ENCODE measurements at regions of chr11 and their contacts with region 1.

Region 1: GRCh38 chr11:111601979-111602864 is at the start of gene SIK2:
- DNase-seq: peak; percentile 96
- H3K4me3 ChIP-seq: peak within 1 kb of the TSS; percentile 64 to 97 (median 85)
- H3K27ac ChIP-seq: peak within 1 kb of the TSS; percentile 98 to 100 (median 98)
- H3K4me1 ChIP-seq: peaks cover 13 to 15% of the 10 kb centered on the region in 2 donors
- H3K27me3 ChIP-seq: no peaks in the 10 kb centered on the region
- CTCF ChIP-seq: peak; percentile 83 to 100 (median 90)
- POLR2A ChIP-seq: peak; percentile 29 to 72
- total RNA-seq, gene SIK2: 20.7 to 35.0 (median 26.8) TPM

Region 2: DNA sequence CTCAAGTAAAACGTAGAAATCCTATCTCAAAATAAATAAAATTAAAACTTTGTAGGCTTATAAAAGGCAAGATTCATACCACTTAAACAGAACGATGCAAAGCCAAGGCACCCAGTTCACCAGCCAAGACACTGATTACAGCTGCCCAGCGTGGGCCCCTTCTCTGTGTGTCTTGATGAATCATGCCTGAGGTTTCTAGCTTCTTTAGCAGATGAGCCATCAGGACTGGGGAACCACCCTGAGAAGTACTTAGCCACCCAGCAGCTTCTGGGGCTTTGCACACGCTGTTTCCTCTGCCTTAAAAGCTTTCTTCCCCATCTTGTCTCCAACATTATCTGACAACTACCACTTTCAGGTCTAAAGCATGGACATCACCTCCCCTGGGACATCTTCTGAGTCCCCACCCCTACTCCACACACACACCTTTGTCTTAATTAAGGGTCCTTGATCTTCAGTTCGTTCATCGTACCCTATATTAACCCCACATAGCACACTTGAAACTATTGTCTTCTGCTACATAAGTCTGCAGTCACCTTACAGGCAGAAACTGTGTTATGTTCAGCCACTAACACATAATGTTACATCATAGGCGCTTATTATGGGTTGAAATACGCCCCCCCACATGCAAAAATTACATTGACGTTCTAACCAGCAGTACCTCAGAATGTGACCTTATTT is 70.4 kb before region 1 on chr11:
- intact Hi-C with region 1: no loop called
- DNase-seq: no peak
- H3K4me3 ChIP-seq: no peak overlapping the region
- H3K27ac ChIP-seq: no peak overlapping the region
- H3K4me1 ChIP-seq: no peaks in the 10 kb centered on the region
- H3K27me3 ChIP-seq: no peaks in the 10 kb centered on the region
- CTCF ChIP-seq: no peak
- POLR2A ChIP-seq: no peak

Region 3: DNA sequence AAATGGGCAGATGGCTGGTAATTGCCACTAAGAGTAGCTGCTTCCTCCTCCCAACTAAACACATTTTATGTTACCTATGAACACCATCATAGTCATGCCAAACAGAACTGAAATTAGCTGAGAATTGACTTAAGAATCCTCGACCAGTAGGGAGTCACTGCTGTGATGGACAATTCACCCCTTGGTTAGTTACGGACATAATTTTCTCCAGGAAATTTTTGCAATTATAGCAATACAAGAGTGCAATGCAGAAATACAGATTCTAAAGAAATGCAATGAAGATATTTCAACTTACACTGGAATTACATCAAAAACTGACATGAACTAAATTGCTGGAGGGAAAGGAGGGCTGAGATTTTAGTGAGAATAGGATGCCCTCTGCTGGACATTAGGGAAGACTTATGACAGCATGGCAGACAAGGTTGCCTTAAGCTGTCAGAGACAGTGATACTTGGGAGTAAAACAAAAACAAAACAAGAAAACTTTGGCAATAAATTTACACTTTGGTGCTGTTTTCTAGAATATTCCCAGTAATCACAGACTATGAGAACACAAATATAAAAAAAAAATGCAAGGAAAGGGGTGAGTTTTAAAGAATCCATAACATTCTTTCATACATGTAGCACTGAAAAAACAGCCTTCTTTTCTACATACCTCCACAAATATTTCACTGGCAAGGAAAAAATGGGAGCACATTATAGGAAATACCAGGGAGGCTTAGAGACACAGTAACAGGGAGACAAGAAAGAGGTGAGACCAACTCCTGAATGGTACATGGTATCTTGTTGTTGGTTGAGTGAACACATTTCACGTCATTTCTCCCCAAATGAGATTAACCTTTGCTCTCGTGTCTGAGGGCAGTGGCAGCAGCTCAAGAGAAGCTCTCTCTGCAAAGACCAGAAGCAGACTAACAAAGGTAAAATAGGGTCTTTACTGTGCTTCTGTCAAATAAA is 175.1 kb after region 1 on chr11:
- intact Hi-C with region 1: loop called (anchors 5 kb)
- DNase-seq: peak in 1 of 2 donors; percentile 11
- H3K4me3 ChIP-seq: no peak overlapping the region
- H3K27ac ChIP-seq: peak overlapping the region in 1 of 3 donors; percentile 27
- H3K4me1 ChIP-seq: peaks cover 12 to 13% of the 10 kb centered on the region in 2 donors
- H3K27me3 ChIP-seq: no peaks in the 10 kb centered on the region
- CTCF ChIP-seq: peak; percentile 23 to 94 (median 77)
- POLR2A ChIP-seq: no peak

Region 4: DNA sequence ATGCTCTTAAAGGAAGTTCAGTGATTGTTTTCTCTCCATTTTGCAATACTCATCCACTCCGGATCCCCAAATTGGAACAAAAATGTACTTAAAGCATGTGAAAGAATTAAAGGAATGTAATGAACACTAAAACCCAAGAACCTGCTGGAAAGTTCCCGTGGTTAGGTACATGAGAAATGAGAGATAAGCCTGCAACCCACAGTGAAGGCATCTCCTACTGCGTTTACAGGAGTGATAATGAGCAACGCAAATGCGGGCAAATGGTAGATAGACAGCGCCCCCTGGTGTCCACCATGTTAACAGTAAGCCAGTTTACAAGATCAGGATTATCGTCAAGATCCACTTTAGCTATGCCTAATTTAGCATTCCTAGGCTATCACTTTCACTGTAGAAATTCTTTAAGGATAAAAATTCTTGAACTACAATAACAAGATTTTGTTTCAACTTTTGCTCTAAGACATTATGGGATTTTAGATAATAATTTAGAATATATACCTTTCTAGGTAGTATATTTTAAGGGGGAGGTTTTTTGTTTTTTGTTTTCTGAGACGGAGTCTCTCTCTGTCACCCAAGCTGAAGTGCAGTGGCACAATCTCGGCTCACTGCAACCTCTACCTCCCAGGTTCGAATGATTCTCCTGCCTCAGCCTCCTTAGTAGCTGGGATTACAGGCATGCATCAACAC is 239.3 kb after region 1 on chr11:
- intact Hi-C with region 1: loop called (anchors 5 kb)
- DNase-seq: peak; percentile 89 to 94
- H3K4me3 ChIP-seq: no peak overlapping the region
- H3K27ac ChIP-seq: peak overlapping the region in 2 of 3 donors; percentile 17 to 21
- H3K4me1 ChIP-seq: peaks cover 0 to 6% of the 10 kb centered on the region in 2 donors
- H3K27me3 ChIP-seq: no peaks in the 10 kb centered on the region
- CTCF ChIP-seq: peak; percentile 75 to 93 (median 84)
- POLR2A ChIP-seq: no peak

Measured in thyroid gland (tissue), 4 donors.